ENCODE measurements at regions of chr2 and their contacts with region 1.

Region 1: GRCh38 chr2:112674229-112674628 is 28.5 kb downstream of the SLC20A1 start:
- DNase-seq: peak; percentile 84 to 93 (median 89)
- H3K4me3 ChIP-seq: peak overlapping the region in 2 of 3 experiments; percentile 17 to 61
- H3K4me3 Mint-ChIP-seq: peak overlapping the region; percentile 69 to 76
- H3K27ac ChIP-seq: peak overlapping the region; percentile 67 to 75
- H3K27ac Mint-ChIP-seq: peak overlapping the region; percentile 86 to 95 (median 90)
- H3K4me1 ChIP-seq: peaks cover 28 to 32% of the 10 kb centered on the region in 2 donors
- H3K4me1 Mint-ChIP-seq: peaks cover 29% of the 10 kb centered on the region
- H3K27me3 ChIP-seq: no peaks in the 10 kb centered on the region
- H3K27me3 Mint-ChIP-seq: no peaks in the 10 kb centered on the region
- CTCF ChIP-seq: no peak

Region 2: GRCh38 chr2:112493858-112494648 is 180.2 kb before region 1 on chr2:
- intact Hi-C with region 1: no loop called
- DNase-seq: no peak
- H3K4me3 ChIP-seq: no peak overlapping the region
- H3K4me3 Mint-ChIP-seq: no peak overlapping the region
- H3K27ac ChIP-seq: no peak overlapping the region
- H3K27ac Mint-ChIP-seq: no peak overlapping the region
- H3K4me1 ChIP-seq: no peaks in the 10 kb centered on the region
- H3K4me1 Mint-ChIP-seq: no peaks in the 10 kb centered on the region
- H3K27me3 ChIP-seq: no peaks in the 10 kb centered on the region
- H3K27me3 Mint-ChIP-seq: peaks cover 0 to 2% (median 0%) of the 10 kb centered on the region in 3 donors
- CTCF ChIP-seq: no peak

Region 3: DNA sequence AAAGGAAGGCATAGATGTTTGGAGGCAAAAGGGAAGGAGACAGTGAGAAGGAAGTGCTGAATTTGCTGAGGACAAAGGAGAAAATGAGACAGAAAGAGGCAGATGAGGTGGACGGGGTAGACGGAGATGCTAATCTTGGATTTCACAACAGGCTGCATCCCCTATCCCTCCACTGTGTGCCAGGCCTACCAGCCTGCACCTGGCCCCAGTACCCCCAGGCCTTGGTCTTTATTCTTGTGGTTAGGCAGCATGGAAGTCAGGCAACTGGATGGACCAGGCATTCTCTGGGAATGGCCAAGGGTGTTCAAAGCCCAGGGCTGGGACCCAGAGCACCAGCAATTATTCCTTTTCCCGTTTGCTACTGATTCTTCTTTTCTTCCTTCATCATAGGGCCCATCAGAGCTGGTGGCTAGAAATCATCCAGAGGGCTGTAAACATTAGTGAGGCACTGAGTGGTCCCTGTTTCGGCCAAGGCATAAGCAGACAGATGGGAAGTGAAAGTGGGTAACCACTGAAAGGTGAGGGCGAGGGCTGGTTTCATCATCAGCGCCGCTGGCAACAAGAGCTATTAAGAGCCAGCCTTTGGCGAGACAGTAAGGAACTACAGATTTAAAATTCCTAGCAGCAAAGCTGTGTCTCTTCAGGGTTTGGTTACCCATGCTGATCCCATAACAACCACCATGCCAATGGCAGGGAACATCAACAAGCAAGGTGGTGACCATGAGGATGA is 37.8 kb before region 1 on chr2:
- intact Hi-C with region 1: no loop called
- DNase-seq: peak in 2 of 3 donors; percentile 42 to 54
- H3K4me3 ChIP-seq: peak overlapping the region in 1 of 3 experiments; percentile 40
- H3K4me3 Mint-ChIP-seq: peak overlapping the region in 1 of 2 donors; percentile 50
- H3K27ac ChIP-seq: peak overlapping the region in 1 of 2 donors; percentile 48
- H3K27ac Mint-ChIP-seq: peak overlapping the region; percentile 16 to 72 (median 46)
- H3K4me1 ChIP-seq: peaks cover 30 to 48% of the 10 kb centered on the region in 2 donors
- H3K4me1 Mint-ChIP-seq: peaks cover 50% of the 10 kb centered on the region
- H3K27me3 ChIP-seq: no peaks in the 10 kb centered on the region
- H3K27me3 Mint-ChIP-seq: peaks cover 2 to 6% (median 3%) of the 10 kb centered on the region in 3 donors
- CTCF ChIP-seq: no peak

Region 4: GRCh38 chr2:112706170-112706664 is 32.0 kb after region 1 on chr2:
- intact Hi-C with region 1: no loop called
- DNase-seq: peak in 1 of 3 donors; percentile 32
- H3K4me3 ChIP-seq: peak overlapping the region in 1 of 3 experiments; percentile 36
- H3K4me3 Mint-ChIP-seq: peak overlapping the region in 1 of 2 donors; percentile 61
- H3K27ac ChIP-seq: peak overlapping the region; percentile 39 to 96
- H3K27ac Mint-ChIP-seq: peak overlapping the region; percentile 43 to 99 (median 85)
- H3K4me1 ChIP-seq: peaks cover 75 to 83% of the 10 kb centered on the region in 2 donors
- H3K4me1 Mint-ChIP-seq: peaks cover 73% of the 10 kb centered on the region
- H3K27me3 ChIP-seq: no peaks in the 10 kb centered on the region
- H3K27me3 Mint-ChIP-seq: peaks cover 0 to 2% (median 0%) of the 10 kb centered on the region in 3 donors
- CTCF ChIP-seq: no peak

Region 5: DNA sequence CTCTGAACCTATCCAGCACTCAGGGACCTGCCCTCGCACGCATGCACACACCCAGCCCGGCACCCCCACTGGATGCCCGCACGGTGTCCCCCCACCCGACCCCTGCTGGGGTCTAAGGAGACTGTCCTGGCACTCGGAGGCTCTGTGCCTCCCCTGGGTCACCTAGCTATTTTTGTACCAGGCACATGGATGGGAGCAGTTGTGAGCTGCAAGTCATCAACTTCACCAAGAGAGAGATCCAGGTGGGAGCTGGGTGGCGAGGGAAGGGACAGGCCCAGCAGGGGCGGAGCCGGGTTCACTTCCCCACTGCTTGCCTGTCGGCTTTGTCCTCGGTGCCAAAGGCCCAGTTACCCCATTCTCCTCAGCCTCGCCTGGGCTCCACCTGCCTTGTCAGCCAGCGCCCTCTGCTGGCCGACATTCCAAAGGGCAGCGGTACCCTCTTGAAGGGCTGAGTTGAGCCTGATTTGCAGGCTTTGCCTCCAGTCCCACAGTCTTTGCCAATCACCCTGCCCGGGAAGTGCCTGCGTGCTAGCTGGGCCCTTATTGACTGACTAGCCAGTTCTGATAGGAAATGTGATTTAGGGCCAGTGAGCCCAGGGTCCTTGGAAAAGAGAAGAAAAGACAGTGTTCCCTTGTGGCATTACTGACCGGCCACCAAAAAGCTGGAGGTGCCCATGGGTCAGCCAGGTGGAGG is 52.4 kb after region 1 on chr2:
- intact Hi-C with region 1: loop called (anchors 5 to 10 kb)
- DNase-seq: peak; percentile 94 to 96 (median 95)
- H3K4me3 ChIP-seq: no peak overlapping the region
- H3K4me3 Mint-ChIP-seq: no peak overlapping the region
- H3K27ac ChIP-seq: peak overlapping the region in 1 of 2 donors; percentile 54
- H3K27ac Mint-ChIP-seq: peak overlapping the region in 4 of 7 donors; percentile 78 to 85 (median 80)
- H3K4me1 ChIP-seq: peaks cover 63 to 69% of the 10 kb centered on the region in 2 donors
- H3K4me1 Mint-ChIP-seq: peaks cover 58% of the 10 kb centered on the region
- H3K27me3 ChIP-seq: no peaks in the 10 kb centered on the region
- H3K27me3 Mint-ChIP-seq: peaks cover 0 to 2% (median 0%) of the 10 kb centered on the region in 3 donors
- CTCF ChIP-seq: peak; percentile 97

Measured in CD14-positive monocyte (primary cell).